ENCODE measurements at regions of chr10 and their contacts with region 1.

Region 1: GRCh38 chr10:49419005-49419404 is 23.1 kb upstream of the DRGX start:
- DNase-seq: no peak
- CTCF ChIP-seq: no peak

Region 2: GRCh38 chr10:49518982-49519578 is 100.1 kb after region 1 on chr10:
- in situ Hi-C with region 1: loop called (anchors 10 kb)
- DNase-seq: peak; percentile 47
- CTCF ChIP-seq: peak; percentile 56

Measured in GM13976 (cell line).